ENCODE measurements at regions of chr13 and their contacts with region 1.

Region 1: GRCh38 chr13:79541426-79542049 is 60.6 kb downstream of the NDFIP2 start:
- DNase-seq: no peak
- H3K4me3 Mint-ChIP-seq: no peak overlapping the region
- H3K27ac Mint-ChIP-seq: no peak overlapping the region
- H3K4me1 Mint-ChIP-seq: peaks cover 34% of the 10 kb centered on the region
- H3K27me3 Mint-ChIP-seq: no peaks in the 10 kb centered on the region

Region 2: GRCh38 chr13:79423801-79424642 is 117.5 kb before region 1 on chr13:
- intact Hi-C with region 1: loop called (anchors 1 kb)
- DNase-seq: no peak
- H3K4me3 Mint-ChIP-seq: no peak overlapping the region
- H3K27ac Mint-ChIP-seq: no peak overlapping the region
- H3K4me1 Mint-ChIP-seq: peaks cover 35% of the 10 kb centered on the region
- H3K27me3 Mint-ChIP-seq: no peaks in the 10 kb centered on the region

Region 3: GRCh38 chr13:79491715-79492114 is 49.8 kb before region 1 on chr13:
- intact Hi-C with region 1: loop called (anchors 2 kb)
- DNase-seq: no peak
- H3K4me3 Mint-ChIP-seq: peak overlapping the region; percentile 63
- H3K27ac Mint-ChIP-seq: peak overlapping the region; percentile 93
- H3K4me1 Mint-ChIP-seq: peaks cover 94% of the 10 kb centered on the region
- H3K27me3 Mint-ChIP-seq: no peaks in the 10 kb centered on the region

Region 4: DNA sequence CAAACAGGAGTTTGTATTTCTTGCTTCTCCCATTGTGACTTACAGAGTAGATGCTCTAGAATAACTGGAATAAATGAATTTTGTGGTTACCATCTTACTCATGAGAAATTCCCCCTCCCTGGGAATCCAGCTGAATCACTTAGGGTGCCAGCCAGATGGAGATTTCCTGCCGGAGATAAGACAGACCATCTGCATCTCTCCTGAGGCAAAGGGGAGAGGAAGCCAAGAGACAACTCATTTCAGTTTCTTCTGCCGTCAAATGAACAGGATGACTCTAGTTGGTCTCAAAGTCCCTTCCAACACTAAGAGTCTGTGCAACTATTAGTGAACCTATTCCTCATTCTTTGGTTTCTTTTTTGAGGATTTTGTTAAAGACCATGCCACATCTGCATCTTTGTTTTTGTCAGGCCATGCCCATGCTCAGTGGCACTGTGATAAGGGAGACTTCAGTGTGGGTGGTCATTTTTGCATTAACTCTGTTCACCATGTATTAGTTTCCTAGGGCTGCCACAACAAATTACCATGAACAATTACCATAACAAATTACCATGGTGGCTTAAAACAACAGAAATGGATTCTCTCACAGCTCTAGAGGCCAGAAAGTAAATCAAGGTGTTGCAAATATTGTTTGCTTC is 52.2 kb after region 1 on chr13:
- intact Hi-C with region 1: no loop called
- DNase-seq: no peak
- H3K4me3 Mint-ChIP-seq: no peak overlapping the region
- H3K27ac Mint-ChIP-seq: no peak overlapping the region
- H3K4me1 Mint-ChIP-seq: peaks cover 5% of the 10 kb centered on the region
- H3K27me3 Mint-ChIP-seq: no peaks in the 10 kb centered on the region